Activated T-helper 1 cell treated with anti-CD3 and anti-CD28 coated beads, Interleukin-12 subunit alpha, Interleukin-12 subunit beta, Interleukin-2, Interleukin-4 antibody, amounts not matched to agents 30 ng/mL and 10 ng/mL and 1 ng/mL, durations not matched to agents 14 hours and 24 hours and 36 hours (primary cell): ENCODE measurements at regions of chr6 and their contacts with region 1.

Region 1: GRCh38 chr6:11654876-11655275 is 117.3 kb downstream of the TMEM170B start:
- DNase-seq: no peak
- H3K4me3 Mint-ChIP-seq: no peak overlapping the region
- H3K27ac Mint-ChIP-seq: no peak overlapping the region
- H3K4me1 Mint-ChIP-seq: peaks cover 20% of the 10 kb centered on the region
- H3K27me3 Mint-ChIP-seq: no peaks in the 10 kb centered on the region

Region 2: GRCh38 chr6:11785774-11786579 is 131.1 kb after region 1 on chr6:
- intact Hi-C with region 1: loop called (anchors 2 kb)
- DNase-seq: peak; percentile 64
- H3K4me3 Mint-ChIP-seq: peak overlapping the region; percentile 28
- H3K27ac Mint-ChIP-seq: peak overlapping the region; percentile 85
- H3K4me1 Mint-ChIP-seq: peaks cover 13% of the 10 kb centered on the region
- H3K27me3 Mint-ChIP-seq: no peaks in the 10 kb centered on the region

Region 3: DNA sequence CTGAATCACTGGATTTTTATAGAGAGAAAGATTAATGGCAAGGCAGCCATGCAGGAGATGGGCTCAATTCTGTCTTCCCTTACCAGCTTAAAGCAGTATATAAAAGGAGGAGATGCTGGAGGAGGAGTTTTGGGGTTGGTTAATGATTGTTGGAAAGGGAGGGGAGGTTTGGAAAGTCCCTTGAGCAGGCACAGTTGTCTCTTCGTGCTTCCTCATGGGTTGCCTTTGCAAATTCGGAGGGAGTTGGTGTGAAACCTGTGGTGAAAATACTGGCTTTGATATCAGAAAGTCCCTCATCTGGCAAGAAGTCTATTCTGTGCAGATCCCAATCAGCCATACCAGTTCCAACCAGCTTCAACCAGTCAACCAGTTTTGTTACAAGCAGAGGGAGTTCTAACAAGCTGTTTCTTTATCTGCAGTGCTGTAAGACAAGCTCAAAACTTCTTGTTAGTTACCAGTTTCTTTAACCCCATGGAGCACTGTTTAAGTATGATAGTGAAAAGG is 464.3 kb after region 1 on chr6:
- intact Hi-C with region 1: loop called (anchors 1 kb)
- DNase-seq: peak; percentile 77
- H3K4me3 Mint-ChIP-seq: peak overlapping the region; percentile 36
- H3K27ac Mint-ChIP-seq: peak overlapping the region; percentile 83
- H3K4me1 Mint-ChIP-seq: peaks cover 67% of the 10 kb centered on the region
- H3K27me3 Mint-ChIP-seq: no peaks in the 10 kb centered on the region

Region 4: GRCh38 chr6:12233693-12234571 is 579.1 kb after region 1 on chr6:
- intact Hi-C with region 1: loop called (anchors 1 kb)
- DNase-seq: peak; percentile 18
- H3K4me3 Mint-ChIP-seq: peak overlapping the region; percentile 16
- H3K27ac Mint-ChIP-seq: peak overlapping the region; percentile 31
- H3K4me1 Mint-ChIP-seq: peaks cover 55% of the 10 kb centered on the region
- H3K27me3 Mint-ChIP-seq: no peaks in the 10 kb centered on the region

Region 5: DNA sequence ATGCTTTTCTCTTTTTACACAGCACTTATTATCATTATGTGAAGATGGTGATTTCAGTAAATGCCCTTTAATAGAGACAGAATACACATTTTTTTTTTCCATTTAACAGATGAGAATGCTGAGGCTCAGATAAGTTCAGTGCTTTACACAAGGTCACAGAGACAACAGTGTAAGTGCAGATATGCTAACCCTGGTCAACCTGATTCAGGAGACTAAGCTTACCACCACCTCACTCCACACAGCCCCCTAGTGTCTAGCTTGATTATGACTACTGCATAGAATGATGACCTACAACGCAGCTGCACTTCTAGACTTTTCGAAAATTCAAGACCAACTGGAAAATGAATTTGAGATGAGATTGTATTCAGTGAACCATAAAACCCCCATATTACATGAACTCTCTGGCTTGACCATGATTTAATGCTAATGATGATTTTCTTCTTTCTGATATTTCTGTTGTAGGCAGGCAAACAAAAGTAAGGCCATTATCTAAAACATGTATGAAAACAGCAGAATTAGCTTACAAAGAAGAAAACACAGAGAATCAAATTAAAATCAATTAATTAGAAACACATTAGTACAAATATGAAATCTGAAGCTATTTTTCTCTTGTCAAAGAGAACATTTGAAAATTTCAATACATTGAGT is 849.6 kb after region 1 on chr6:
- intact Hi-C with region 1: loop called (anchors 1 kb)
- DNase-seq: no peak
- H3K4me3 Mint-ChIP-seq: no peak overlapping the region
- H3K27ac Mint-ChIP-seq: no peak overlapping the region
- H3K4me1 Mint-ChIP-seq: no peaks in the 10 kb centered on the region
- H3K27me3 Mint-ChIP-seq: no peaks in the 10 kb centered on the region

Region 6: GRCh38 chr6:12895721-12896120 is 1240.8 kb after region 1 on chr6:
- intact Hi-C with region 1: loop called (anchors 2 kb)
- DNase-seq: no peak
- H3K4me3 Mint-ChIP-seq: no peak overlapping the region
- H3K27ac Mint-ChIP-seq: no peak overlapping the region
- H3K4me1 Mint-ChIP-seq: no peaks in the 10 kb centered on the region
- H3K27me3 Mint-ChIP-seq: peaks cover 15% of the 10 kb centered on the region